Colonic mucosa (tissue), 4 donors: ENCODE measurements at regions of chr12 and their contacts with region 1.

Region 1: DNA sequence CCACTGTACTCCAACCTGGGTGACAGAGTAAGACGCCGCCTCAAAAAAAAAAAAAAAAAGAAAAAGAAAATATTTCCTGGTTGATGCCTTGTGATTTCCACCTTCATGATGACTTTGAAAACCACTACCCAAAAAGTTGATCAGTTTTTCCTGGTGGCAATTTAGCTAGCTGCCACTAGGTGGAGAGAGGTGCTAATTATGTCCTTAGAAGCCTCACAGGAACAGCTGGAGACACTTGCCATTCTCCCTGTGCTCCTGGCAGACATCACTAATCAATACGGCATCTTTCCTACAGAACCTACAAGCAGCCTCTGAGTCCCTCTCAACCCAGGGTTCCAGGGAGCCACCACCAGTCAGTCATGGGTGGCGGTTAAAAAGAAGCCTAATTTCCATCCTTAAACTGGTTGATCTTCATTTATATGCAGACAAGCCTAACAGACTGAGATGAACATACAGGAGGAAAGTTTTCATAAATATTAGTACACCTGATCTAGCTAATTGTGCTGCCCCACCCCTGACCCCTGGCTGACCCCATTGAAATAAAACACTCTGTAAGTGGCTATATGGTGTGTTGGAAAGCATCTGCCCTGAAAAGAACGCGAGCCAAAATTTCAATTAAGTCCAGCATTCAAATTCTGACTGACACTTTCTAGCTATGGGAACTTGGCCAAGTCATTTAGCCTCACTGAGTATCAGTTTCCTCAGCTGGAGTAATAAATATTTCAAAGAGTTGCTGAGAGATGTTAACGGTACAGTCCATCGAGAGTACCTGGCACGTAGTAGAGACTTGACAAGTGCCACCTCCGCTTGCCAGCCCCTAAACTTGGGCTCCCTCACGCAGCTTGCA is 6.2 kb upstream of the OAS1 start:
- DNase-seq: peak; percentile 68
- H3K4me3 ChIP-seq: no peak overlapping the region
- H3K27ac ChIP-seq: no peak overlapping the region
- H3K4me1 ChIP-seq: no peaks in the 10 kb centered on the region
- H3K27me3 ChIP-seq: no peaks in the 10 kb centered on the region
- CTCF ChIP-seq: peak; percentile 67

Region 2: GRCh38 chr12:112937741-112938719 is 37.5 kb after region 1 on chr12 and contains the start of gene OAS3:
- intact Hi-C with region 1: loop called (anchors 5 kb)
- DNase-seq: peak; percentile 92
- H3K4me3 ChIP-seq: peak within 1 kb of the TSS; percentile 70
- H3K27ac ChIP-seq: peak within 1 kb of the TSS; percentile 81
- H3K4me1 ChIP-seq: peaks cover 8% of the 10 kb centered on the region
- H3K27me3 ChIP-seq: no peaks in the 10 kb centered on the region
- CTCF ChIP-seq: no peak
- total RNA-seq, gene OAS3: 15.2 to 39.1 TPM

Region 3: GRCh38 chr12:113030875-113031525 is 130.5 kb after region 1 on chr12:
- intact Hi-C with region 1: loop called (anchors 2 kb)
- DNase-seq: no peak
- H3K4me3 ChIP-seq: no peak overlapping the region
- H3K27ac ChIP-seq: no peak overlapping the region
- H3K4me1 ChIP-seq: no peaks in the 10 kb centered on the region
- H3K27me3 ChIP-seq: peaks cover 4% of the 10 kb centered on the region
- CTCF ChIP-seq: peak; percentile 71

Region 4: GRCh38 chr12:113392988-113393579 is 492.6 kb after region 1 on chr12:
- intact Hi-C with region 1: no loop called
- DNase-seq: peak; percentile 24
- H3K4me3 ChIP-seq: no peak overlapping the region
- H3K27ac ChIP-seq: no peak overlapping the region
- H3K4me1 ChIP-seq: no peaks in the 10 kb centered on the region
- H3K27me3 ChIP-seq: no peaks in the 10 kb centered on the region
- CTCF ChIP-seq: no peak